ENCODE measurements at regions of chr18 and their contacts with region 1.

Region 1: DNA sequence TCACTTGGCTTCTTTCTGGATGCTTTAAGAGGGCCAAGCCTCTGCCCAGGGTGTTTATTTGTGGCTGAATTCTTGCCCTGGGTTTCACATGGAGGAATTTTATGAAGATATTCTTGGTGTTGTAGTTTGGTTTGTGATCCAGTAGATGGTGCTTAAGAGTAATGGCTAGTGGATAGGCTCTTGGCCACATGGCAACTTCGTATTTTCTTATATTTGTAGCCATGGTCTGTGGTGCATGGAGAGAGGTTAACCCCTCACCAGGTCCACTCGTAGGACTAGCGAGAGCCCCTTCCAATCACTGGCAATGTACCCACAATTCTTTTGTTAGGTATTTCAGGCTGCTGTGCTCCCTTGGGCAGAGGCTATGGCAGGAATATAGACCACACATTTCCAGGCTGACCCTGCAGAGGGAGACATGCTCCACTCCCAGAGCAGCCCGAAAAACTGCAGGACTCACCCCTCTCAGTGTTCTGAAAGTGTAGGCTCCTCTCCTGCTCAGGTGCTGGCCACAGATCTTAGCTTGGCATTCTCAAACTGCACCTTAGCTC is 582.1 kb upstream of the SETBP1 start:
- DNase-seq: no peak
- ATAC-seq: peak; percentile 34

Region 2: DNA sequence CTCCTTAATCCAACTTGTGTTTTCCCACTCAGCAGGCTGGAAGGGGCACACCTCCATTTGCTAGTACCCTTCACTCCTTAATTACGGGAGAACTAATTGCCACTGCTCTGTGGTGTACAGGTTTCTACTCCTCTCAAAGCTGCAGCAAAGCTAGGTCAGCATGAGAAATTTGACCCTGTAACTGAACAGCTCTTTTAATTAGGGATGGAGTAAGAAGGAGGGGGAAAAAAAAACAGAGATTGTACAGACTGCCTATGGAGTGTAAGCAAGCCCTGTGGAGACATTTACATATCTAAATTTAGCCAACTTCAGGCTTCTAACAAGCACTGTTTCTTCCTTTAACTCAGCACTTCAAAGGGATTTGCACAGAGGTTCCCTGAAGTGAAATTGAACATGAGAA is 47.6 kb before region 1 on chr18:
- intact Hi-C with region 1: loop called (anchors 2 kb)
- DNase-seq: no peak
- ATAC-seq: no peak